G401 (cell line): ENCODE measurements at regions of chr4 and their contacts with region 1.

Region 1: GRCh38 chr4:64539234-64539849 is 130.1 kb upstream of the TECRL start:
- DNase-seq: peak; percentile 73

Region 2: DNA sequence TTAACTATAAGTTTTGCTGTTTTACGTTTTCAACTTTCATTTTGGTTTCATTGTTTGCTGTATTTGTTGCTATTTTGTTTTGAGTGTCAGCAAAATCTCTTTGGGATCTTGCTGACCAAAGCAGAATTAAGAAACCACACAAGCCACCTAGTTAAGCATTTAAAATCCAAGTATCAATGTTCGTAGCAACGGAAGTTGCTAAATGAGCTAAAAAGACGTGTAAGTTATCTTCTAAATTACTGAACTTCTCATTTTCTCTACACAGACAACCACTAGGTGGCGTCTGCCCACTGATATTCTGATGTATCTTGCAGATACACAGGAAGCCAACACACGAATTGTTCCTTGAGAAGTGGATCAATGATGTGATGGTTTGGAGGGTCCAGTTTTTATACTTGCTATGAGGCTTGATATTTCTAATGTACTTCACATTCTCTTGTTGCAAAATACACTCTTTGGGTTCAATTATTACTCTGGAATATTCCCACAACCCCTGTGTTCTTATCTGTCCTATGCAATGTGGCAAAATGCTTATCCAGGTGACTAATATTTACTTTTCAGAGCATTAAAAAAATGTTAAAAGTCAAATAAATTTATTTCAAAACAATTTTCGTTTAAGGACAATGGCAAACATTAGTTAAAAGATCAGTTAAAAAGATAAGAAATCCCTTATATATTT is 380.6 kb before region 1 on chr4:
- in situ Hi-C with region 1: loop called (anchors 25 kb)
- DNase-seq: peak; percentile 60